ENCODE measurements at regions of chr9 and their contacts with region 1.

Region 1: DNA sequence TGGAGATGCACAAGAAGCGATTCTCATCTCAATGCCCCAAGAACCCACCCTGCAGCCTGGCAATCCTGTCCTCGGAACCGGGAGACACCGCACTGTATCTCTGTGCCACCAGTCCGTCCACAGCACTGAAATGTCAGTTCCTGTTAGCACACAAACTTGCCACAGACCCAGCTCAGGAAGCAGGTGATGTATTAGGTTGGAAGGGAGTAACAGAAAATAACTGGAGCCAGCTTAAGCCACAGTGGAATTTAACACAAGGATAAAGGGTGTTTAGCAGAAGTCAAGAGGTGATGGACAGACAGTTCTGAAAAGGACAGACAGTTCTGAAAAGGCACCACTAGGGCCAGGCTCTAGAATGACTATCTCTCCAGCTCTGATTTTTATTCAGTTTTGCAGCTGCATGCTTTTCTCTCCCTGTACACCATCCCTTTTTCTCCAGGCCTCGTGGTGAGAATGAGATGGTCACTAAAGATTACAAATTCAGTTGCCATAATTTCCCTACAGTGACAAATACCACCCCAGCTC is 114.4 kb downstream of the ANKRD18B start:
- DNase-seq: no peak
- H3K4me3 ChIP-seq: no peak overlapping the region
- H3K27ac ChIP-seq: no peak overlapping the region
- H3K4me1 ChIP-seq: no peaks in the 10 kb centered on the region
- H3K27me3 ChIP-seq: peaks cover 89% of the 10 kb centered on the region

Region 2: GRCh38 chr9:33721674-33722358 is 83.4 kb after region 1 on chr9:
- in situ Hi-C with region 1: loop called (anchors 10 kb)
- DNase-seq: peak; percentile 84
- H3K4me3 ChIP-seq: no peak overlapping the region
- H3K27ac ChIP-seq: no peak overlapping the region
- H3K4me1 ChIP-seq: no peaks in the 10 kb centered on the region
- H3K27me3 ChIP-seq: peaks cover 15% of the 10 kb centered on the region

Measured in GM23248 (cell line).